ENCODE measurements at regions of chr9 and their contacts with region 1.

Region 1: GRCh38 chr9:100598641-100599145 is 20.8 kb downstream of the CAVIN4 start:
- DNase-seq: peak; percentile 71
- ATAC-seq: peak; percentile 93
- H3K4me3 ChIP-seq: peak overlapping the region; percentile 47
- H3K27ac ChIP-seq: no peak overlapping the region
- H3K4me1 ChIP-seq: peaks cover 1% of the 10 kb centered on the region; the same call in 1 of the 2 replicates
- H3K27me3 ChIP-seq: no peaks in the 10 kb centered on the region; the same call in 1 of the 2 replicates
- CTCF ChIP-seq: no peak
- POLR2A ChIP-seq: no peak
- RAD21 ChIP-seq: no peak

Region 2: DNA sequence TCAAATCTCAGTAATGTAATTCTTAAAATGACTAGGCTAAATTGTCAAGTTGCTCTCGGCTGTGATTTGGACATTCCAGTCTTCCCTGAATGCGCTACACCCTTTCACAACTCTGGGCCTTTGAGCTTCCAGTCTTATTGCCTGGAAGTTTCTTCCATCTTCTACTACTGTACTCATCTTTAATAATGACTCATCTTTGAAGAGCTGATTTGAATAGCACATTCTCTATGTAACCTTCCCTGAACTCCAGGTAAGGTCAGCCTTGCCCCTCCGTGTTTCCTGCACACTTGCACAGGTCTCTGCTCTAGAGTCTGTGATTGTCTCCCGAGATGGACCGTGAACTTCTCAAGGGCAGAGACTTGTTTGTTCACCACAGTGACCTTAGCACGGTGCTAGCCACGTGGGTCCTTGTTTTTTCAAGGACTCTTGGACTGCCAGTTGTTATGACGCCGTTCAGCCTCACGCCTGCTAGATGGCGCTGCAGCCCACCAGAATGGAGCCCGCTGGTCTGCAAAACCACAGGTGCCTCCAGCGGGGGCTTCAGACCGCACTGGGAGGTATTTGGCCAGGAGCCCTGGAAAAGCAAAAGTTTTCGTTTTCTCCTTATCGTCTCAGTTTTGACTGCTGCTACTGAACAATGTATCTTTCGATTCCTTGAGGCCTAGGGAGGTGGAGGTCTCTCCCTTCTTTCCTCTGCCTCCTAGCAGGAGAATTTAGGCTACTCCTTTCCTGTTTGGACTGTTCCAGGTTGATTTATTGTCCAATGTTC is 1332.3 kb before region 1 on chr9:
- CTCF ChIA-PET with region 1: no interaction called
- POLR2A ChIA-PET with region 1: no interaction called
- dilution Hi-C with region 1: no loop called
- in situ Hi-C with region 1: no loop called
- intact Hi-C with region 1: loop called (anchors 10 kb)
- DNase-seq: peak; percentile 68
- ATAC-seq: peak; percentile 81
- H3K4me3 ChIP-seq: no peak overlapping the region
- H3K27ac ChIP-seq: no peak overlapping the region
- H3K4me1 ChIP-seq: peaks cover 2% of the 10 kb centered on the region; the same call in 1 of the 2 replicates
- H3K27me3 ChIP-seq: no peaks in the 10 kb centered on the region
- CTCF ChIP-seq: peak; percentile 84
- POLR2A ChIP-seq: 0 out of 2 replicates have a peak, but pooled peaks have one; percentile 23
- RAD21 ChIP-seq: peak; percentile 96

Region 3: GRCh38 chr9:100028201-100028784 is 570.4 kb before region 1 on chr9:
- CTCF ChIA-PET with region 1: no interaction called
- POLR2A ChIA-PET with region 1: no interaction called
- dilution Hi-C with region 1: no loop called
- in situ Hi-C with region 1: loop called (anchors 25 kb)
- intact Hi-C with region 1: loop called (anchors 1 kb)
- DNase-seq: peak; percentile 76
- ATAC-seq: peak; percentile 99
- H3K4me3 ChIP-seq: no peak overlapping the region
- H3K27ac ChIP-seq: no peak overlapping the region
- H3K4me1 ChIP-seq: no peaks in the 10 kb centered on the region
- H3K27me3 ChIP-seq: no peaks in the 10 kb centered on the region
- CTCF ChIP-seq: peak; percentile 85
- POLR2A ChIP-seq: no peak
- RAD21 ChIP-seq: peak; percentile 92

Region 4: GRCh38 chr9:100150214-100150613 is 448.5 kb before region 1 on chr9:
- CTCF ChIA-PET with region 1: no interaction called
- POLR2A ChIA-PET with region 1: no interaction called
- dilution Hi-C with region 1: no loop called
- in situ Hi-C with region 1: no loop called
- intact Hi-C with region 1: loop called (anchors 10 kb)
- DNase-seq: peak; percentile 44
- ATAC-seq: no peak; the same call in 1 of the 2 replicates
- H3K4me3 ChIP-seq: no peak overlapping the region
- H3K27ac ChIP-seq: no peak overlapping the region
- H3K4me1 ChIP-seq: no peaks in the 10 kb centered on the region
- H3K27me3 ChIP-seq: no peaks in the 10 kb centered on the region
- CTCF ChIP-seq: no peak
- POLR2A ChIP-seq: no peak
- RAD21 ChIP-seq: no peak

Region 5: GRCh38 chr9:100346836-100347235 is 251.9 kb before region 1 on chr9:
- CTCF ChIA-PET with region 1: interaction called, 3 read pairs
- POLR2A ChIA-PET with region 1: no interaction called
- dilution Hi-C with region 1: no loop called
- in situ Hi-C with region 1: no loop called
- intact Hi-C with region 1: loop called (anchors 5 kb)
- DNase-seq: peak; percentile 53
- ATAC-seq: peak; percentile 77
- H3K4me3 ChIP-seq: no peak overlapping the region
- H3K27ac ChIP-seq: peak overlapping the region; percentile 1; the same call in 1 of the 2 replicates
- H3K4me1 ChIP-seq: peaks cover 2% of the 10 kb centered on the region; the same call in 1 of the 2 replicates
- H3K27me3 ChIP-seq: no peaks in the 10 kb centered on the region
- CTCF ChIP-seq: no peak
- POLR2A ChIP-seq: no peak
- RAD21 ChIP-seq: no peak

Region 6: DNA sequence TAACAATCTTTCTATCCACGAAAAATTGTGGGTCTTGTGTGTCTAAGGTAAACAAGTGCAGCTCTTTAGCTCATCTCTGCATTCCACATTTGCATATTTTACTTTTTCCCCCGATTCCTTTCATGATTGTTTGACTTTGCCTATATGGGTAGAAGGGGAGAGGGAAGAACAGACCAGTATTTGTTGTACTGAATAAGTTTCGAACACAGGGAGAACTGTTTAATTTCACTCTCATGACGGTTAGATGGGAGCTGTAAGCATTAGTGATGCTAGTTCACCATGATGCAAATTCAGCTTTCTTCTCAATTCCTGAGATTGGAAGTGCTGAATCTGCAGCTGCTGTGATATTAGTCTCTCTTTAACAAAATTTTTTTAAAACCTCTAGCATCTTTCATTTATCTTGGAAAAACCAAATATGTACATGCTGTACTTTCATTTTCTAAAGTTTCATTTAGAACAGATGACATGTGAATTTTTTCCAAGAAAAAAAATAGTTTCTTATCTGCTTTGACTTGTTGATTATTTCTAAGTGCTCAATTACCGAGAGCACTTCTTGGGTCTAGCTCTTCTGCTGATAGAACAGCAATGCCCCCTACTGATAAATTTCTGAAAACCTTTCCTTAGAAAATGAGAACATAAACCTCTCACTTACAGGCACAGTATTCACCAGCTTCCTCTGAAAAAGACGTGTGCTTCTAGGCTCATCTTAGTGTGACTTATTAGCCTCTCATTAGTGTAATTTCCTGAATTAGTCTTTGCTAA is 636.6 kb after region 1 on chr9:
- CTCF ChIA-PET with region 1: interaction called, 5 read pairs
- POLR2A ChIA-PET with region 1: no interaction called
- dilution Hi-C with region 1: no loop called
- in situ Hi-C with region 1: no loop called
- intact Hi-C with region 1: loop called (anchors 10 kb)
- DNase-seq: no peak
- ATAC-seq: no peak
- H3K4me3 ChIP-seq: no peak overlapping the region
- H3K27ac ChIP-seq: no peak overlapping the region
- H3K4me1 ChIP-seq: no peaks in the 10 kb centered on the region
- H3K27me3 ChIP-seq: no peaks in the 10 kb centered on the region
- CTCF ChIP-seq: peak; percentile 47
- POLR2A ChIP-seq: no peak
- RAD21 ChIP-seq: peak; percentile 43

Measured in IMR-90 (cell line).